Astrocyte of the cerebellum (primary cell): ENCODE measurements at regions of chr22 and their contacts with region 1.

Region 1: GRCh38 chr22:33529424-33530113 is 390.7 kb downstream of the LARGE1 start:
- DNase-seq: peak; percentile 35
- H3K4me3 ChIP-seq: no peak overlapping the region
- CTCF ChIP-seq: no peak

Region 2: GRCh38 chr22:33116872-33117547 is 412.6 kb before region 1 on chr22:
- in situ Hi-C with region 1: no loop called
- DNase-seq: no peak
- H3K4me3 ChIP-seq: no peak overlapping the region
- CTCF ChIP-seq: no peak

Region 3: DNA sequence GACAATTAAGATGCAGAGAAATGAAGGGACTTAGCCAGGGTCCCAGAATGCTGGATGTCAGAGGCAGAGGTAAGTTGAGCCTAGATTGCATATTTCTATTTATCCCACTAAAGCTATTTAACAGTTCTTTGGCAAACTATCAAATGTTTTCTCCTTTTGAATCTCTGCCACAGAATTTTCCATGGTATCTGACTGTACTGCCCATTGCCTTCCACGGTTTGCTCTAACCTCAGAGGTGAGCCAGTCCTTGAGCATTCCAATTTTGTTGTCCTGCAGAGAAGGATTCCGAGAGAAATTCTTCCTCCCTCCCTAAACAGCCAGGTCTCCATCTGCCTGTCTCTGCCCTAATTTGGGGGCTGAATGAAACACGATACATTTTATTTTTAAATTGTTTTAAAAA is 103.1 kb before region 1 on chr22:
- in situ Hi-C with region 1: loop called (anchors 5 kb)
- DNase-seq: peak; percentile 43
- H3K4me3 ChIP-seq: no peak overlapping the region
- CTCF ChIP-seq: no peak

Region 4: GRCh38 chr22:33476716-33477115 is 52.9 kb before region 1 on chr22:
- in situ Hi-C with region 1: no loop called
- DNase-seq: no peak
- H3K4me3 ChIP-seq: no peak overlapping the region
- CTCF ChIP-seq: no peak

Region 5: DNA sequence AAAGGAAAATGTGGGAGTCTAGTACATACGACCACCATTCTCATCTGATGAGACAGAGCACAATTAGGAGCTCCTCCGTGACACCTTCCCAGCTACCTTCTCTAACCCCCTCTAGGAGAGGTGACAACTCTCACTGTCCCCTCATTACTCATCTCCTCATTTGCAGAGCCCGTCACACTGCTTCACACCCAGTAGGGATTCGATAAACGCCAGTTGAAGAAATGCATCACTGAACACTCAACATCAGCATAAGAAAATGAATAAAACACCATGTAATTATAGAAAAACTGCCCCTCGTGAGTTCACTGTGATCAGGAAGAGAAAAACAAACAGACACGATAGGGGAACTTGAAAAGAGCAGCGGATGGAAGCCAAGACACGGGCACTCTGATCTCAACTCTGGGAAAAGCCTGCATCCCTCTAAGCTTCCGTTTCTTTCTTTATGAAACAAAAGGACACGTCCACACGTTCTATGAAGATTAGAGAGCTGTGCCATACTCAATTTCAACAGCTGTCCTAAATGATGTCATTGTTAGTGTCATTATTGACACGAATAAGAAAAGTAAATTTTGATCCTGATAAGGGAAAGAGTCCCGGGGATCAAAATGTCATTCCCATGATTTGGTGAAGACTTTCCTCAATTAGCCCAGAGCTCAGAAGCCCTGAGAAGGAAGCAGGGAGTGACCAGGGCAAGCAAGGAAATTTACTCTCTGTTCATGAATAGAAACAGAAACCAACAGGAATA is 33.8 kb after region 1 on chr22:
- in situ Hi-C with region 1: loop called (anchors 5 kb)
- DNase-seq: no peak
- H3K4me3 ChIP-seq: no peak overlapping the region
- CTCF ChIP-seq: no peak